ENCODE measurements at regions of chr2 and their contacts with region 1.

Region 1: DNA sequence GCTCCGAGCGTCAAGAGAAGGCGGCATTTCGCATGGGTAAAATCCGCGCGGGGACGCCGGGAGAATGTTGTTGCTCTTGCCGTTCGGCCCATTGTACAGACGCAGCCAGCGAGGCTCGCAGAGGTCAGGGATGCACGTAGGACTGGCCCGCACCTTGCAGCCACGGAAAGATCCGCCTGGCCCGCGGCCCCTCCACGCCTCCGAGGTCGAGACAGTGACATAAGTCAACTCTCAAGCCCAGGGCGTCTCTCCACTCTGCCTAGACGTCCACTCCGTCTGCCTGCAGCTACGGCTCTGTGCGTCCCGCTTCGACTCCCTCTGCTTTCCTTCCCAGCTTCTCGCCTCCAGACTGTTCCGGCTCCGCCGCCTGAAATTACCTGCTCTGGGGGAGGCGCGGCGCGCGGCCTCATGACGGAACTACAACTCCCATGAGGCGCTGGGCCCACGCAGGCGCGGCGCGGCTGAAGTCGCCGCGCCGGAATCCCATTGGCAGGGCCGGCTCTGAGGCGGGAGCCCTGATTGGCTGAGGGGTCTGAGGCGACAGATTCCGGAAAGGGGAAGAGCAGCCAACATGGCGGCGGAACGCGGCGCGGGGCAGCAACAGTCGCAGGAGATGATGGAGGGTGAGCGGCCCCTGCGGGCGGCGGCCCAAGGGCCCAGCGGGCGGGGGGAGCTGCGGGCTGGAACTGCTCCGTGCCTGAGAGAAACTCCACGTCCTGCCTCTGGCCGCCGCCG is at the start of gene PPP1R7:
- DNase-seq: peak; percentile 84
- ATAC-seq: peak; percentile 83
- H3K4me3 Mint-ChIP-seq: peak within 1 kb of the TSS; percentile 100
- H3K27ac Mint-ChIP-seq: peak within 1 kb of the TSS; percentile 95
- H3K4me1 Mint-ChIP-seq: peaks cover 26% of the 10 kb centered on the region
- H3K27me3 Mint-ChIP-seq: no peaks in the 10 kb centered on the region
- CTCF ChIP-seq: no peak
- total RNA-seq, gene PPP1R7: 72.0 and 74.5 TPM in 2 replicates

Region 2: DNA sequence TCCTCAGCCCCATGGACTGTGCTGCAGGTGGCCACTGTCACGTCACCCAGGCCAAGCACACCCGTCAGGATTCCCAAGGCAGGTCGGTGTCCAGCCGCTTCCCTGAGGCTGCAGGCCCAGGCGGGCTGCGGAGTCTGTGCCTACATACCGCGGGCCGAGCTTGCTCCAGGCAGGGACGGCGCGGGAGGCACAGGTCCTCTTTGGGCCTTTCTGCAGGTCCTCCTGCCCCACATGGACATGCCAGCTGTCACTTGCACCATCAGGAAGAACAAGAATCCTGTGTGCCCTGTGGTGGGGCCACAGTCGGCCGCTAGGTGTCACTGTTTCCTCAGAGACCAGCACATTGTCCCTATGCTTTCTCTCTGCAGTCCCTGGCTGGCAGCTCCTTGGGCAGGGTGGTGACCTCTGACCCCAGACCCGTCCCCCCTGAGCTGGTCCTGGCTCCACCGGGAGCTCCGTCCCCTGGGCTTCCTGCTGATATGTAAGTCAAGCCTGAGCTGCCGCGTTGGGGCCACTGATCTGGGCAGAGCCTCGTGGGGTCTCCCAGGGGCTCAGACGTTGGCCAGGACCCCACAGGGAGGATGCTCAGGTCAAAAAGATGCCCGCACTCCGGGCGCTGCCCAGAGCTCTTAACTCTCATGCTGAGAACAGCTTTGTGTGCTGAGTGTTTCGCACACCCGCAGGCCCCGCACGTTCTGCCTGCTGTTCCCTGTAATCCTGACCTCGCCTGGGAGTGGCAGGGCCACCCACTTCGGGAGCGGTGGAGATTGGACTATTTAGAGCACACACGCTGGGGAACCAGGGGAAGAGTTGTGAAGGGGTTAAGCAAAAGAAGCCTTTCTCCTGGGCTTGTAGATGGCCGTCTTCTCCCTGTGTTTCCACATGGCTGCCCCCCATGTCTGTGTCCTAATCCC is 298.8 kb before region 1 on chr2:
- CTCF ChIA-PET with region 1: interaction called, 4 read pairs
- POLR2A ChIA-PET with region 1: no interaction called
- intact Hi-C with region 1: loop called (anchors 1 kb)
- DNase-seq: peak; percentile 75
- ATAC-seq: peak; percentile 86
- H3K4me3 Mint-ChIP-seq: no peak overlapping the region
- H3K27ac Mint-ChIP-seq: no peak overlapping the region
- H3K4me1 Mint-ChIP-seq: no peaks in the 10 kb centered on the region
- H3K27me3 Mint-ChIP-seq: no peaks in the 10 kb centered on the region
- CTCF ChIP-seq: peak; percentile 65

Region 3: GRCh38 chr2:240983361-240983995 is 166.6 kb before region 1 on chr2:
- CTCF ChIA-PET with region 1: interaction called, 6 read pairs
- POLR2A ChIA-PET with region 1: interaction called, 9 read pairs
- intact Hi-C with region 1: loop called (anchors 2 kb)
- DNase-seq: peak; percentile 45
- ATAC-seq: peak; percentile 86
- H3K4me3 Mint-ChIP-seq: no peak overlapping the region
- H3K27ac Mint-ChIP-seq: no peak overlapping the region
- H3K4me1 Mint-ChIP-seq: peaks cover 3% of the 10 kb centered on the region
- H3K27me3 Mint-ChIP-seq: peaks cover 14% of the 10 kb centered on the region
- CTCF ChIP-seq: no peak

Region 4: GRCh38 chr2:241009601-241010530 is 140.2 kb before region 1 on chr2:
- CTCF ChIA-PET with region 1: no interaction called
- POLR2A ChIA-PET with region 1: no interaction called
- intact Hi-C with region 1: no loop called
- DNase-seq: peak; percentile 15
- ATAC-seq: peak; percentile 21
- H3K4me3 Mint-ChIP-seq: no peak overlapping the region
- H3K27ac Mint-ChIP-seq: no peak overlapping the region
- H3K4me1 Mint-ChIP-seq: peaks cover 3% of the 10 kb centered on the region
- H3K27me3 Mint-ChIP-seq: peaks cover 10% of the 10 kb centered on the region
- CTCF ChIP-seq: no peak

Region 5: GRCh38 chr2:241081643-241082340 is 68.3 kb before region 1 on chr2:
- CTCF ChIA-PET with region 1: interaction called, 69 read pairs
- POLR2A ChIA-PET with region 1: interaction called, 47 read pairs
- intact Hi-C with region 1: loop called (anchors 1 kb)
- DNase-seq: no peak
- ATAC-seq: no peak
- H3K4me3 Mint-ChIP-seq: no peak overlapping the region
- H3K27ac Mint-ChIP-seq: no peak overlapping the region
- H3K4me1 Mint-ChIP-seq: peaks cover 12% of the 10 kb centered on the region
- H3K27me3 Mint-ChIP-seq: no peaks in the 10 kb centered on the region
- CTCF ChIP-seq: no peak

Region 6: DNA sequence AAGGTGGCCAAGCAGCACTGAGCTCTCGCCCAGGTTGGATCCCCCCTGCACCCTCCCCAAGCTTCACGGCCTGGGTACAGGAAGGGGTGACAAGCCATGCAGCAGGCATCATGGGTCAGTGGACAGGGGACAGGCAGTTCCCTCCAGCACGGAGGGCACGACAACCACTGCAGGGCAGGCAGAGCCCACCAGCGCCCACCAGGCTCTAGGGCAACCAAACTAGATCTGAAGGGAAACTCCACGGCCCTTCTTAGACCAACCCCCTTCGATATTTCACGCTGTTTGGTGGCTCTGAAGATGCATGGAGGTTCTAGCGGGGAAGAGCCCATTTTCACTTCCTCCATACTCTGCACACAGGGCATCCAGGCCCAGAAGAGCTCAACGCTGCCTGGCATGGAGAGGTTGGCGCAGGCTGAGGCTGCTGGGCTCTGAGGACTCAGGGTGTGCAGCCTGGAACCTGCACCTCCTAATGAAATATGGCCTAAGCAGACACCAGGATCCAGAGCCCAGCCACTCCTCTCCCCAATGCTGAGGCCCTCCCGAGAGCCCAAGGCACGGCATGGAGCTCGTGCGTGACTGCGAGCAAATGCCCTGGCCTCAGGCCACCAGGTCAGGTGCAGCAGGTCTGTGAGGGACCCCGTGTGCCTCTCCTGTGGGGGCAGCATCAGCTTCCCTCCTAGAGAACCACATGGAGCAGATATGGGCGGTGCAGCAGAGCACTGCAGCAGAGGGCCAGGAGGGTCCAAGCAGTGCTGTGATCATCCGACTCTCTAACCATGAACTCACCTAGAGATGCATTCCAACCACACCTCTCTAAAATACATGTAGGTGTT is 39.3 kb before region 1 on chr2:
- CTCF ChIA-PET with region 1: interaction called, 9 read pairs
- POLR2A ChIA-PET with region 1: interaction called, 137 read pairs
- intact Hi-C with region 1: loop called (anchors 1 kb)
- DNase-seq: peak; percentile 46
- ATAC-seq: peak; percentile 80
- H3K4me3 Mint-ChIP-seq: peak overlapping the region; percentile 70
- H3K27ac Mint-ChIP-seq: peak overlapping the region; percentile 94
- H3K4me1 Mint-ChIP-seq: peaks cover 53% of the 10 kb centered on the region
- H3K27me3 Mint-ChIP-seq: no peaks in the 10 kb centered on the region
- CTCF ChIP-seq: no peak

Region 7: DNA sequence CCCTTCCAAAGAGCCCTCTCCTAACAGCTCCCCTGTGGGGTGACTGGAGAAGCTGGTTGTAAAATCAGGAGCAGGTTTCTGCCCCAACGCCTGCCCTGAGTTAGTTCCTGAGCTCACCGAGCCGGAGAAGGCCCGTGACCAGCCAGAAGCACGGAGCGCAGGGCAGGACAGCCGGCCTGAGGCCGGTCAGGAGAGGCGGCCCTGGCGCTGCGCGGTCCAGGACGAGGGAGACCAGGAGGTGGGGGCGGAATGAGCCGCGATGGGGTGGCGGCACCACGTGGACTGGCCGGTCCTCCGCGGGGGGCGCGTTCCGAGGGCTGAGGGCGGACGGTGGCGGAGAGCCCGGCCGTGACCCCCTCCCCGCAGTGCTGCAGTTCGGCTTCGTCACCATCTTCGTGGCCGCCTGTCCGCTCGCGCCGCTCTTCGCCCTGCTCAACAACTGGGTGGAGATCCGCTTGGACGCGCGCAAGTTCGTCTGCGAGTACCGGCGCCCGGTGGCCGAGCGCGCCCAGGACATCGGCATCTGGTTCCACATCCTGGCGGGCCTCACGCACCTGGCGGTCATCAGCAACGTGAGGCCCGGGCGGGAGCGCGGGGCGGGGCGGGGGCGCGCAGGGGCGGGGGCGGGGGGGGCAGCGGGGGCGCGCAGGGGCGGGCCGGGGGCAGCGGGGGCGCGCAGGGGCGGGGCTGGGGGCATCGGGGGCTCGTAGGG is 67.4 kb after region 1 on chr2:
- CTCF ChIA-PET with region 1: no interaction called
- POLR2A ChIA-PET with region 1: no interaction called
- intact Hi-C with region 1: loop called (anchors 5 kb)
- DNase-seq: peak; percentile 53
- ATAC-seq: peak; percentile 73
- H3K4me3 Mint-ChIP-seq: peak overlapping the region; percentile 83
- H3K27ac Mint-ChIP-seq: peak overlapping the region; percentile 73
- H3K4me1 Mint-ChIP-seq: peaks cover 10% of the 10 kb centered on the region
- H3K27me3 Mint-ChIP-seq: no peaks in the 10 kb centered on the region
- CTCF ChIP-seq: no peak